ENCODE measurements at regions of chr17 and their contacts with region 1.

Region 1: GRCh38 chr17:49997791-49998703 is 3.0 kb upstream of the DLX3 start:
- DNase-seq: peak; percentile 92
- H3K4me3 Mint-ChIP-seq: no peak overlapping the region
- H3K27ac Mint-ChIP-seq: peak overlapping the region; percentile 31
- H3K4me1 Mint-ChIP-seq: peaks cover 33% of the 10 kb centered on the region
- H3K27me3 Mint-ChIP-seq: peaks cover 64% of the 10 kb centered on the region

Region 2: GRCh38 chr17:49763735-49764558 is 234.1 kb before region 1 on chr17 and contains the start of gene FAM117A:
- CTCF ChIA-PET with region 1: no interaction called
- POLR2A ChIA-PET with region 1: no interaction called
- DNase-seq: peak; percentile 99
- H3K4me3 Mint-ChIP-seq: peak within 1 kb of the TSS; percentile 90
- H3K27ac Mint-ChIP-seq: peak within 1 kb of the TSS; percentile 90
- H3K4me1 Mint-ChIP-seq: peaks cover 48% of the 10 kb centered on the region
- H3K27me3 Mint-ChIP-seq: peaks cover 26% of the 10 kb centered on the region
- total RNA-seq, gene FAM117A: 30.6 to 34.1 TPM

Region 3: GRCh38 chr17:49861150-49861892 is 136.7 kb before region 1 on chr17:
- CTCF ChIA-PET with region 1: interaction called, 51 read pairs
- POLR2A ChIA-PET with region 1: interaction called, 3 read pairs
- DNase-seq: peak; percentile 57
- H3K4me3 Mint-ChIP-seq: no peak overlapping the region
- H3K27ac Mint-ChIP-seq: no peak overlapping the region
- H3K4me1 Mint-ChIP-seq: no peaks in the 10 kb centered on the region
- H3K27me3 Mint-ChIP-seq: peaks cover 11% of the 10 kb centered on the region

Region 4: DNA sequence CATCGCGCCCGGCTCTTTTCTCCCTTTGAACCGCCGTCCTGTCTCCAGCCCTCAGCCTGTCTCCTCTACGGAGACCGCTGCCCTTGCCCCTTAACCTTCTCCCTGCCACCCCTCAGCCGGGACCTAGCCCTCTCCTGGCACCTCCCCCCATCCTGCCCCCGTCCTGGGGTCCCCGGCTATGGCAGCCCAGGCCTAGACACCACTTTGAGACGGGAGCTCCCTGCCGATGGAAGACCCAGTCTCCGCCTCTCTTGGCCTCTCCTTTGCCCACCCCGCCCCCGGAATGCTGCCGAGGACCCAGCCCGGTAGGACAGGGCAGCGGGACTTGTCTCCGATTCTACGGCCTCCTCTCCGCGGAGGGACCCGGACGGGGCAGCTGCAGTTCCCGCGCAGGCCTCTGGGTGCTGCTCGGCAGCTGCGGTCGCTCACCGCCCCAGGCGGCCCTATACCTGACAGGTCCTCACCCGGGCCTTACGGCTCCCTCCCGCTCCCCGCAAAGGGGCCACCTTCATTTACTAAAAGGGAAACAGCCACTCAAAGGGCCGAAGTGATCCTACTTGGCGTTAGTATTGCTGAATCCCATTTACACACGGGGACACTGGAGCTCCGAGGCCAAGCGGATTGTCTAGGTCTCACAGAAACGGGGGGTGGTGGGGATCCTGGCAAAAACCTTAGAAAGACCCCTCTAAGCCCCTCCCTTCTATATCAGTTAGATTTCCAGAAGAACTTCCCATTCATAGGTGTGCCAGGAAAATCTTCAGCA is 117.6 kb before region 1 on chr17:
- CTCF ChIA-PET with region 1: interaction called, 34 read pairs
- POLR2A ChIA-PET with region 1: no interaction called
- DNase-seq: peak; percentile 71
- H3K4me3 Mint-ChIP-seq: no peak overlapping the region
- H3K27ac Mint-ChIP-seq: no peak overlapping the region
- H3K4me1 Mint-ChIP-seq: peaks cover 6% of the 10 kb centered on the region
- H3K27me3 Mint-ChIP-seq: peaks cover 40% of the 10 kb centered on the region

Region 5: DNA sequence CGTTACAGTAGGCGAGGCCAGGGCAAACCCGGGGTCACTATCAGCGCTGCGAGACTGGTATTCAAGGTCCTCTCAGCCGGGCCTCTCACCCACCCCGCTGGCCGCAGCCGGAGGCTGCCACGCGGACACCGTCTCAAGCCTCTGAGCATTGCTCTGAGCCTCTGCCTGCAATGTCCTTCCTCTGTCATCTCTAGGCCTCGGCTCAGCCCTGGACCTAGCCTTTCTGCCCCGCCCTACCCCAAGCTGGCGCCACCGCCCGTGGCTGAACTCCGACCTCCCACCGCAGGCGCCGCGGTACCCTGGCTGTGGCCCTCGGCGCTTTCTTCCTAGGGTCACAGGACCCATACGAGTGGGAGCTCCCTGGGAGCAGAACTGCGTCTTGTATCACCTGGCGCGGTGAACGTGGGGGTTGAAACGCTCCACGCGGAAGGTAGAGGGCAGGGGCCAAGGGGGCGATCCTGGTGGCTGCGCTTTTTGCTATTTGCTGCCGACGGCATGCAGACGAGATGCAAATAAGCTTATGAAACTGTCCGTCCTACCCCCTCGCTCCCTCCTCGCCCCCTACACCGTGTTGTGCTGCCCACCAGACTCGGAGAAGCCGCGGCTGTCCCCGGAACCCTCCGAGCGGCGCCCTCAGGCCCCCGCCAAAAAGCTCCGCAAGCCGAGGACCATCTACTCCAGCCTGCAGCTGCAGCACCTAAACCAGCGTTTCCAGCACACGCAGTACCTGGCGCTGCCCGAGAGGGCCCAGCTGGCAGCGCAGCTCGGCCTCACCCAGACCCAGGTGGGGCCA is 25.4 kb before region 1 on chr17:
- CTCF ChIA-PET with region 1: interaction called, 41 read pairs
- POLR2A ChIA-PET with region 1: no interaction called
- DNase-seq: no peak
- H3K4me3 Mint-ChIP-seq: no peak overlapping the region
- H3K27ac Mint-ChIP-seq: no peak overlapping the region
- H3K4me1 Mint-ChIP-seq: peaks cover 22% of the 10 kb centered on the region
- H3K27me3 Mint-ChIP-seq: peaks cover 73% of the 10 kb centered on the region

Region 6: DNA sequence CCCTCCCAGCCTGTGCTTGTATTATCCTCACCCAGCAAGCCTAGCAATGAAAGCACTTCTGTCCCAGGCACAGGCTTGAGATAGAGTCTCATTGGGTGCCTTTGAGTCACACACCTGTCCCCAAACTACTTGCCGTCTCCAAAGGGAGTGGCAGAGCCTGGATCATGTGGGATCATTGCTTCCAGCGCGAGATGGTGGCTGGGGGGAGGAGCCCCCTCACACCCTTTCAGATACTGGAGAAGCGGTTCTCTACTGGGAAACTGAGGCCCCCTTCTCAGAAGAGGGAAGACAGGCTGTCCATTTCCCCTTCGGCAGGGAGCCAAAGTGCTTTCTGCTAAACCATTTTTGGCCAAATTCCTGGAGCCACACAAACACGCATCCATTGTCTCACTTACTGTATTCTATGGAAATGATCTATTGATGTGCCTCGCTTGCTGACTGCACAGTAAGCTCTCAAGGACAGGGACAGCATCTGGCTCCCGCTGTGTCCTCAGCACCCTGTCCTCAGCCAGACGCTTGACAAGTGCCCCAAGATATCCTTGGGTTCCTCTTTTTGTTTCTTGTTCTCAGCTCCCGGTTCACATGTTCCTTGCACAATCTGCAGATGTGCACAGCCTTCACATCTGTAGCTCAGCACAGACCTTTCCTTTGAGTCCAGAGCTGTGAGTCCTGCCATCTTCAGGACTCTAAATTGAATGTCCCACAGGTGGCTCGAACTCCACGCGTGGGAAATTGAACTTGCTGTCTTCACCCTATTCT is 23.0 kb after region 1 on chr17:
- CTCF ChIA-PET with region 1: interaction called, 10 read pairs
- POLR2A ChIA-PET with region 1: no interaction called
- DNase-seq: no peak
- H3K4me3 Mint-ChIP-seq: no peak overlapping the region
- H3K27ac Mint-ChIP-seq: no peak overlapping the region
- H3K4me1 Mint-ChIP-seq: no peaks in the 10 kb centered on the region
- H3K27me3 Mint-ChIP-seq: peaks cover 9% of the 10 kb centered on the region